Endothelial cell of umbilical vein (primary cell): ENCODE measurements at regions of chr14 and their contacts with region 1.

Region 1: GRCh38 chr14:38357557-38357956 is 101.7 kb upstream of the CLEC14A start:
- DNase-seq: peak; percentile 97
- H3K4me3 ChIP-seq: peak overlapping the region in 1 of 3 experiments; percentile 19
- H3K27ac ChIP-seq: peak overlapping the region; percentile 76
- H3K4me1 ChIP-seq: peaks cover 36% of the 10 kb centered on the region
- H3K27me3 ChIP-seq: no peaks in the 10 kb centered on the region
- CTCF ChIP-seq: no peak
- POLR2A ChIP-seq: peak; percentile 78

Region 2: GRCh38 chr14:38208618-38209562 is 148.7 kb before region 1 on chr14:
- CTCF ChIA-PET with region 1: no interaction called
- POLR2A ChIA-PET with region 1: no interaction called
- dilution Hi-C with region 1: no loop called
- intact Hi-C with region 1: loop called (anchors 2 kb)
- DNase-seq: peak; percentile 47
- H3K4me3 ChIP-seq: peak overlapping the region; percentile 34 to 58 (median 44)
- H3K27ac ChIP-seq: no peak overlapping the region
- H3K4me1 ChIP-seq: peaks cover 36% of the 10 kb centered on the region
- H3K27me3 ChIP-seq: no peaks in the 10 kb centered on the region
- CTCF ChIP-seq: peak in 1 of 2 donors; percentile 48
- POLR2A ChIP-seq: no peak

Region 3: DNA sequence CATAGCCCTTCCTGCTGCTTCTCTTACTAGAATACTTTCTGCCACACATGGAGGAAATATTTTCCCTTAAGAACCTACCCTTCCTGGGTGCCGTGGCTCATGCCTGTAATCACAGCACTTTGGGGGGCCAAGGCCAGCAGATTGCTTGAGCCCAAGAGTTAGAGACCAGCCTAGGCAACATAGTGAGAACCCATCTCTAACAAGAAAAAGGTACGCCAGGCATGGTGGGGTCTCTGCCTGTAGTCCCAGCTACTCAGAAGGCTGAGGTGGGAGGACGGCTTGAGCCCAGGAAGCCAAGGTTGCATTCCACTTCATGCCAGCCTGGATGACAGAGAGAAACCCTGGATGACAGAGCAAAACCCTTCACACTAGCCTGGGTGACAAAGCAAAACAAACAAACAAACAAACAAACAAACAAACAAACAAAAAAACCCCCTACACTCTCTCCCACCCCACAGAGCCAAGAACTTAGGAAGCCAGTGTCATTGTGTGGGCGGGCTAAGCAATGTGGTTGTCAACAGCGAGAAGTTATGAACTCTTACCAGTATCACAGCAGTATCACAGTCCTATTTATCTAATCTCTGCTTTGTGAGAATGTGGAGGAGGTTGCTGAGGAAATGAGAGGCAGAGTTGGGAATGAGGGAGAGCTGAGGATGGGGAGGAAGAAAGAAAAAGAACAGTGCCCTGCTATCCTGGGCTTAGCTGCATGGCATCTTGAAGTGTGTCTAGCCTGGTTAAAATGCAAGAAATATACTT is 47.9 kb before region 1 on chr14:
- CTCF ChIA-PET with region 1: interaction called, 6 read pairs
- POLR2A ChIA-PET with region 1: no interaction called
- dilution Hi-C with region 1: no loop called
- intact Hi-C with region 1: loop called (anchors 1 kb)
- DNase-seq: no peak
- H3K4me3 ChIP-seq: peak overlapping the region in 1 of 3 experiments; percentile 23
- H3K27ac ChIP-seq: peak overlapping the region; percentile 74
- H3K4me1 ChIP-seq: peaks cover 40% of the 10 kb centered on the region
- H3K27me3 ChIP-seq: no peaks in the 10 kb centered on the region
- CTCF ChIP-seq: no peak
- POLR2A ChIP-seq: no peak

Region 4: DNA sequence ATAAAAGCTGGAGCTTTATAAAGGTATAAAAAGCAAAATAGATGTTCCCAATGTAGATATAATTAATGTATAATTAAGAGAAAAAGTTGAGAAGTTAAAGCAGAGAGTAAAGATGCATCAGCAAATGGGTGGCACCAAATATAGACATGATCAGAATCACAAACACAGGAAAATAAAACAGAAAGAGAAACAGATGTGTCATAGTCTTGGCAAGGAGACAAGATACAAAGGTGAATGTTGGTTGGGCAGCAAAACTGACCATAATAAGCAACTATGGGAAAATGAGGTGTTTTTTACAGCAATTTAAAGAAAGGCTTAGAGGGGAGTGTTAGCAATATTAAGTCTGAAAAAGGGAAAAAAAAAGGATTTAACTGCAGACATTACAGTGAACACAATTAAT is 33.8 kb after region 1 on chr14:
- CTCF ChIA-PET with region 1: no interaction called
- POLR2A ChIA-PET with region 1: no interaction called
- dilution Hi-C with region 1: no loop called
- intact Hi-C with region 1: loop called (anchors 1 kb)
- DNase-seq: peak; percentile 89
- H3K4me3 ChIP-seq: peak overlapping the region in 1 of 3 experiments; percentile 10
- H3K27ac ChIP-seq: peak overlapping the region; percentile 69
- H3K4me1 ChIP-seq: peaks cover 19% of the 10 kb centered on the region
- H3K27me3 ChIP-seq: no peaks in the 10 kb centered on the region
- CTCF ChIP-seq: no peak
- POLR2A ChIP-seq: no peak

Region 5: GRCh38 chr14:38989922-38990546 is 632.5 kb after region 1 on chr14:
- CTCF ChIA-PET with region 1: no interaction called
- POLR2A ChIA-PET with region 1: no interaction called
- dilution Hi-C with region 1: no loop called
- intact Hi-C with region 1: loop called (anchors 1 kb)
- DNase-seq: peak; percentile 15
- H3K4me3 ChIP-seq: no peak overlapping the region
- H3K27ac ChIP-seq: no peak overlapping the region
- H3K4me1 ChIP-seq: peaks cover 38% of the 10 kb centered on the region
- H3K27me3 ChIP-seq: no peaks in the 10 kb centered on the region
- CTCF ChIP-seq: no peak
- POLR2A ChIP-seq: no peak